Activated CD8-positive, alpha-beta T cell treated with anti-CD3 and anti-CD28 coated beads, Interleukin-2, amount 10 ng/mL, durations not matched to agents 7 days and 5 days (primary cell): ENCODE measurements at regions of chr6 and their contacts with region 1.

Region 1: DNA sequence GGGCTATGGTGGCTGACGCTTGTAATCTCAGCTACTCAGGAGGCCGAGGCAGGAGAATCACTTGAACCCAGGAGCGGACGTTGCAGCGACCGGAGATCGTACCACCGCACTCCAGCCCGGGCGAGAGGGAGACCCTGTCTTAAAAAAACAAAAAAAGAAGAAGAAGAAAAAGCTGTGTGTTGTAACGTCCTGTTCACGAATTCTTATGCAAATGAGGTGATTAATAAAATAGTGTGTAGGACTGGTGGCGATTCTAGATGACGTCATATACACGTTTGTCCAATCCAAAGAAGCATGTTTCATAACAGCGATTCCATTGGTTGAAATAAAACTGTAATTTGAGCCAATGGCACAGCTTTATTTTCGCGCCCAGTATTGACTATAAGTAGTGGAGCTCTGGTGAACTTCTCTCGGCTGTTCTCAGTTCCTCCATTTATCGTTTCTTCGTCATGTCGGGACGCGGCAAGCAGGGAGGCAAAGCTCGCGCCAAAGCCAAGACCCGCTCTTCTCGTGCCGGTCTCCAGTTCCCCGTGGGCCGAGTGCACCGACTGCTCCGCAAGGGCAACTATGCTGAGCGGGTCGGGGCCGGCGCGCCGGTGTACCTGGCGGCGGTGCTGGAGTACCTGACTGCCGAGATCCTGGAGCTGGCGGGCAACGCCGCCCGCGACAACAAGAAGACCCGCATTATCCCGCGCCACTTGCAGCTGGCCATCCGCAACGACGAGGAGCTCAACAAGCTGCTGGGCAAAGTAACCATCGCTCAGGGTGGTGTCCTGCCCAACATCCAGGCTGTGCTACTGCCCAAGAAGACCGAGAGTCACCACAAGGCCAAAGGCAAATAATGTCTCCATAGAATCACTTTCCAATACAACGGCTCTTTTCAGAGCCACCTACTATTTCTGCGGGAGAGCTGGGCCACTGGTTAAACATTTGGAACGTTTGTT is 47.0 kb downstream of the OR2B2 start:
- DNase-seq: peak; percentile 90
- ATAC-seq: peak; percentile 57
- H3K4me3 Mint-ChIP-seq: peak overlapping the region; percentile 87
- H3K27ac Mint-ChIP-seq: peak overlapping the region; percentile 99
- H3K4me1 Mint-ChIP-seq: peaks cover 55% of the 10 kb centered on the region
- H3K27me3 Mint-ChIP-seq: no peaks in the 10 kb centered on the region

Region 2: DNA sequence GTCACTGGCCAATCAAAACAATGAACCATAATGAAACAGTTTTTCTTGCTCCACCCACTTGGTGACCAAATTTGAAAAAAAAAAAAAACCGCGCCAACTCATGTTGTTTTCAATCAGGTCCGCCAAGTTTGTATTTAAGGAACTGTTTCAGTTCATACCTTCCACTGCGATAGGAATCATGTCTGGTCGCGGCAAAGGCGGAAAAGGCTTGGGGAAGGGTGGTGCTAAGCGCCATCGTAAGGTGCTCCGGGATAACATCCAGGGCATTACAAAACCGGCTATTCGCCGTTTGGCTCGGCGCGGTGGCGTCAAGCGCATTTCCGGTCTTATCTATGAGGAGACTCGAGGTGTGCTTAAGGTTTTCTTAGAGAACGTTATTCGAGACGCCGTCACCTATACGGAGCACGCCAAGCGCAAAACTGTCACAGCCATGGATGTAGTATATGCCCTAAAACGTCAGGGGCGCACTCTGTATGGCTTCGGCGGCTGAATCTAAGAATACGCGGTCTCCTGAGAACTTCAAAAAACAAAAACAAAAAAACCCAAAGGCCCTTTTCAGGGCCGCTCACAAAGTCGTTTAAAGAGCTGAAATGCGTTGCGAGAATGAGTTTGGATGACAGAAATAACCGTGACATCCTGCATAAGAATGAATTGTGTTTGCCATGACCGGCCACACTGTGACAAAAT is 1761.3 kb before region 1 on chr6:
- CTCF ChIA-PET with region 1: no interaction called
- POLR2A ChIA-PET with region 1: interaction called, 12 read pairs
- DNase-seq: peak; percentile 93
- ATAC-seq: peak; percentile 89
- H3K4me3 Mint-ChIP-seq: peak overlapping the region; percentile 85
- H3K27ac Mint-ChIP-seq: peak overlapping the region; percentile 98
- H3K4me1 Mint-ChIP-seq: peaks cover 26% of the 10 kb centered on the region
- H3K27me3 Mint-ChIP-seq: peaks cover 2% of the 10 kb centered on the region

Region 3: DNA sequence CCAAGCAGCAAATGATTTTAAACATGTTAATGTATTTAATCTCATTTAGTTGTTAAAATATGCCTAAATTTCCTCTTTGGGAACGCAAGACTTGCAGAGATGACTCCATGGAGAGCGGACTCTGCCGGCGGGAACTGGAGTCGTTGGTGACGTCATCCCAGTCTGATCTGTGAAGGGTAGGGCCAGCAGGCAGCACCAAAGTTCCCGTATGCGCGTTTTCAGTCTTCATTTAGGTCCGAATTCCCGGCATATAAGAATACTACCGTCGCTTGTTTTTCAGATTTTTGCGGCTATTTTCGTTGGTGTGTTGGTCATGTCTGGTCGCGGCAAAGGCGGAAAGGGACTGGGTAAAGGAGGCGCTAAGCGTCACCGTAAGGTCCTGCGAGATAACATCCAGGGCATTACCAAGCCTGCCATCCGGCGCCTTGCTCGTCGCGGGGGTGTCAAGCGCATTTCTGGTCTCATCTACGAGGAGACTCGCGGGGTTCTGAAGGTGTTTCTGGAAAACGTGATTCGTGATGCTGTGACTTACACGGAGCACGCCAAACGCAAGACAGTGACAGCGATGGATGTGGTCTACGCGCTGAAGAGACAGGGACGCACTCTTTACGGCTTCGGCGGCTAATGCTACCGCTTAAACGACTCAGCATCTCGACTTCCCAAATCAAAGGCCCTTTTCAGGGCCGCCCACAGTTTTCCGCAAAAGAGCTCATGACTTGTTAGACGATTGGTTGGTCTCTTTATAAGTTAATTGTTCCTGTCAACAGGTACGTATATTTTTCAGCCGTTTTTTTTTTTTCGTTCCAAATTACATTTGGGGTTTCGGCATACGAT is 1660.6 kb before region 1 on chr6:
- CTCF ChIA-PET with region 1: no interaction called
- POLR2A ChIA-PET with region 1: interaction called, 165 read pairs
- DNase-seq: peak; percentile 95
- ATAC-seq: peak; percentile 66
- H3K4me3 Mint-ChIP-seq: no peak overlapping the region
- H3K27ac Mint-ChIP-seq: no peak overlapping the region
- H3K4me1 Mint-ChIP-seq: peaks cover 41% of the 10 kb centered on the region
- H3K27me3 Mint-ChIP-seq: no peaks in the 10 kb centered on the region

Region 4: DNA sequence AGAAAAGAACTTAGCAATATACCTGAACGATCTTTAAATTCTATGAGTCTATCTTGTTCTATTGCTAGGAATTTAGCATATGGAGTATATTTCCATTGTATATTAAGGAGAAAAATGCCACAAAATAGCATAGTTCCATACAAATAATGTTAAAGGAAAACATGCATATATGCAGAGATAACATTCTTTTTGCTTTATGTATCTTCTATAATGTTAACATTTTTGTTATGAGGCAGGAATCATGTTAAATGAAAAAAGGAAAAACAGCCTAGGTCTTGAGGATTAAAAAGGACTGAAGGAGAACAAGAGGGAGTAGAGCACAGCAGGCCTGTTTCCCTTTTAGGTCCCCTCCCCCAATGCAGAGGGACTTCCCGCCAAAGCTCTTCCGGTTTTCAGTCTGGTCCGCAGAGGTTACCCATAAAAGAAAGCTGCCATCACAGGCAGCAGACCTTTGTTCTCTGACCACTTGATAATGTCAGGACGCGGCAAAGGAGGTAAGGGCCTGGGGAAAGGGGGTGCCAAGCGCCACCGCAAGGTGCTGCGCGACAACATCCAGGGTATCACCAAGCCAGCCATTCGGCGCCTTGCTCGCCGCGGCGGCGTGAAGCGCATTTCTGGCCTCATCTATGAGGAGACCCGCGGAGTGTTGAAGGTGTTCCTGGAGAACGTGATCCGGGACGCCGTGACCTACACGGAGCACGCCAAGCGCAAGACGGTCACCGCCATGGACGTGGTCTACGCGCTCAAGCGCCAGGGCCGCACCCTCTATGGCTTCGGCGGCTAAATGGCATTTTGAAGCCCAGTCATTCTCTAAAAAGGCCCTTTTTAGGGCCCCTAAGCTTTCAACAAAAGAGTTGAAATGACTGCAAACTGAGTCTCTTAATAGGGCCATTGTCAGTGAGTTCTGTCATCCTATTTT is 726.1 kb before region 1 on chr6:
- CTCF ChIA-PET with region 1: no interaction called
- POLR2A ChIA-PET with region 1: interaction called, 291 read pairs
- DNase-seq: peak; percentile 87
- ATAC-seq: peak; percentile 68
- H3K4me3 Mint-ChIP-seq: peak overlapping the region; percentile 95
- H3K27ac Mint-ChIP-seq: peak overlapping the region; percentile 98
- H3K4me1 Mint-ChIP-seq: peaks cover 71% of the 10 kb centered on the region
- H3K27me3 Mint-ChIP-seq: no peaks in the 10 kb centered on the region

Region 5: GRCh38 chr6:27847706-27848105 is 17.5 kb before region 1 on chr6:
- CTCF ChIA-PET with region 1: interaction called, 6 read pairs
- POLR2A ChIA-PET with region 1: interaction called, 2,805 read pairs
- DNase-seq: no peak
- ATAC-seq: no peak
- H3K4me3 Mint-ChIP-seq: no peak overlapping the region
- H3K27ac Mint-ChIP-seq: no peak overlapping the region
- H3K4me1 Mint-ChIP-seq: no peaks in the 10 kb centered on the region
- H3K27me3 Mint-ChIP-seq: peaks cover 12% of the 10 kb centered on the region

Region 6: DNA sequence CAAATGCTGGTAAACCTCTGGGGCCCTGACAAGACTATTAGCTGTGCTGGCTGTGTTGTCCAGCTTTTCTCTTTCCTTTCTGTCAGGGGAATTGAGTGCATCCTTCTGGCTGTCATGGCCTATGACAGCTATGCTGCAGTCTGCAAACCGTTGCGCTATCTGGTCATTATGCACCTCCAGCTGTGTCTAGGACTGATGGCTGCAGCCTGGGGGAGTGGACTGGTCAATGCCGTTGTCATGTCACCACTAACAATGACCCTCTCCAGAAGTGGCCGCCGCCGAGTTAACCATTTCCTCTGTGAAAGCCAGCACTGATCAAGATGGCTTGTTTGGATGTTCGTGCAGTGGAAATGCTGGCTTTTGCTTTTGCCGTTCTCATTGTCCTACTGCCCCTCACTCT is 112.2 kb after region 1 on chr6:
- CTCF ChIA-PET with region 1: no interaction called
- POLR2A ChIA-PET with region 1: no interaction called
- DNase-seq: no peak
- ATAC-seq: no peak
- H3K4me3 Mint-ChIP-seq: no peak overlapping the region
- H3K27ac Mint-ChIP-seq: no peak overlapping the region
- H3K4me1 Mint-ChIP-seq: no peaks in the 10 kb centered on the region
- H3K27me3 Mint-ChIP-seq: peaks cover 25% of the 10 kb centered on the region